CD14-positive monocyte (primary cell): ENCODE measurements at regions of chr3 and their contacts with region 1.

Region 1: DNA sequence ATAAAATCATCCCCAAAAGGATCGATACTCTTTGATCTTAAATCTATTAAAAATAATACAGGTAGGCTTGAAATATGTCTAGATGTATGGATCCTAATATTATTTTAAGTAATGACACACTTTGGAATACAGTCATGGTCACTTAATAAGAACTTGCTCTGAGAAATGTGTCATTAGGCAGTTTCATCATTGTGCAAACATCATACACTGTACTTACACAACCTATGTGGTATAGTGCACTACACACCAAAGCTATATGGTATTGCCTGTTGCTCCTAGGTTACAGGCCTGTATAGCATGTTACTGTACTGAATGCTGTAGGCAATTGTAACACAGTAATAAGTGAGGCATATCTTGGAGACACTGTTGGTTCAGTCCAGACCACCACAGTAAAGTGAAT is 307.1 kb downstream of the RAP2B start:
- DNase-seq: no peak
- H3K4me3 ChIP-seq: no peak overlapping the region
- H3K4me3 Mint-ChIP-seq: no peak overlapping the region
- H3K27ac ChIP-seq: no peak overlapping the region
- H3K27ac Mint-ChIP-seq: no peak overlapping the region
- H3K4me1 ChIP-seq: no peaks in the 10 kb centered on the region
- H3K4me1 Mint-ChIP-seq: no peaks in the 10 kb centered on the region
- H3K27me3 ChIP-seq: no peaks in the 10 kb centered on the region
- H3K27me3 Mint-ChIP-seq: peaks cover 0 to 7% (median 0%) of the 10 kb centered on the region in 3 donors
- CTCF ChIP-seq: no peak

Region 2: DNA sequence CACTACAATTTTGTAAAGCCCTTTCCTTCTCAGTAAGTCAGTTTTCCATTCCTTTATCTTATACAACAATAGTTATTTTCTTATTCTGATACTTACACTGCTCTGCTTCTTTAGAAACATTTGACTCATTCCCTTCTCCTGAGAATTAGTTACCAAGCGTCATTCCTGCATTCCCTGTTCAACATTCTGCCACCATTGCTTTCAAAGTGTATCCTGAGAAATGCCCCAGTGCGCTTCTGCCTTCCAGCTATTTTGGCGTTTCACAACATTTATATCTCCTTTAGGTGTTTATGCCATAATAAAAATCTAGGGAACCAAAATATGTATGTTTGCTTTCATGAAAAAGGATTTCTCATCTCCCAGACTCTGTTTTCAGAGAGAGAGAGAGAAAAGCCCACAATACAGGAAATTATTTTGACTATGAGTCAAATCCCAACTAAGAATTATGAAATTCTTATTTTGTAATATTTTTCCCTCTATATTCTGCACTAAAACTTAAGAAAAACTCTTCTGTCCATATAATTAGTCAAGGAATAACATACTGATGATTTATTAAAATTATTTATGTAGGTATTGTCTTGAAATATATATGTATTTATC is 425.3 kb before region 1 on chr3:
- intact Hi-C with region 1: no loop called
- DNase-seq: peak in 2 of 3 donors; percentile 21 to 44
- H3K4me3 ChIP-seq: peak overlapping the region in 1 of 3 experiments; percentile 67
- H3K4me3 Mint-ChIP-seq: peak overlapping the region; percentile 66 to 72
- H3K27ac ChIP-seq: peak overlapping the region in 1 of 2 donors; percentile 17
- H3K27ac Mint-ChIP-seq: peak overlapping the region in 6 of 7 donors; percentile 39 to 86 (median 63)
- H3K4me1 ChIP-seq: peaks cover 17 to 23% of the 10 kb centered on the region in 2 donors
- H3K4me1 Mint-ChIP-seq: peaks cover 24% of the 10 kb centered on the region
- H3K27me3 ChIP-seq: no peaks in the 10 kb centered on the region
- H3K27me3 Mint-ChIP-seq: no peaks in the 10 kb centered on the region
- CTCF ChIP-seq: no peak

Region 3: DNA sequence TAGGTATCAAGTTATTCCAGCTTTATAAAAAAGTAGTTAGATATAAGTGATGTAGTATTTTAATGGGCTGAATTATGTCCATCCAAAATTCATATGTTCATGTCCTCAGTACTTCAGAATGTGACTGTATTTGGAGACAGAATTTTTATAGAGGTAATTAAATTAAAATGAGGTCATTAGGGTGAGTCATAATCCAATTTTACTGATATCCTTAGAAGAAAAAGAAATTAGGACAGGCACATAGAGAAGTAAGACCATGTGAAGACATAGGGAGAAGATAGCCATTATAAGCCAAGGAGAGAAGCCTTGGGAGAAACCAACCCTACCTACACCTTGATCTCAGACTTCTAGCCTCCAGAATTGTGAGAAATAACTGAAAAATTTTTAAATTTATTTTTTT is 276.8 kb before region 1 on chr3:
- intact Hi-C with region 1: no loop called
- DNase-seq: no peak
- H3K4me3 ChIP-seq: no peak overlapping the region
- H3K4me3 Mint-ChIP-seq: no peak overlapping the region
- H3K27ac ChIP-seq: no peak overlapping the region
- H3K27ac Mint-ChIP-seq: no peak overlapping the region
- H3K4me1 ChIP-seq: no peaks in the 10 kb centered on the region
- H3K4me1 Mint-ChIP-seq: no peaks in the 10 kb centered on the region
- H3K27me3 ChIP-seq: no peaks in the 10 kb centered on the region
- H3K27me3 Mint-ChIP-seq: peaks cover 0 to 1% (median 0%) of the 10 kb centered on the region in 3 donors
- CTCF ChIP-seq: no peak

Region 4: DNA sequence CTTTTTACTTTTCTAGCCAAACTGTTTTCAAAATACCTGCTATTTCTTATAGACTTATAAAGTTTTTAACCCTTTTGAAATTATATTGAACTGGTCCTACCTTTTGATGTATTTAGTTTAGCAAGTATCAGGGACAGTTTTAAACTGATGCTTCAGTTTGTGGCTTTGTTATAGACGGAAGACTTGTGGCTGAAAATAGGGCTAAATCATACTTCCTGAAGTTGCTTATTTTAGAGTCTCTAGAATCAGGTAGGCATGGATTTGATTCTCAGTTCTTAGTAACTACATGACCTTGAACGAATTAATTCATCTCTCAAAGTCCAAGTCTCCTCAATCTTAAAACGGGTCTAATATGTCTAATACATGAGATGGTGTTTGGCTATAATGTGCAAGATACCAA is 15.7 kb after region 1 on chr3:
- intact Hi-C with region 1: loop called in 1 of 2 experiments (anchors 2 kb)
- DNase-seq: no peak
- H3K4me3 ChIP-seq: no peak overlapping the region
- H3K4me3 Mint-ChIP-seq: no peak overlapping the region
- H3K27ac ChIP-seq: no peak overlapping the region
- H3K27ac Mint-ChIP-seq: peak overlapping the region in 1 of 7 donors; percentile 2
- H3K4me1 ChIP-seq: no peaks in the 10 kb centered on the region
- H3K4me1 Mint-ChIP-seq: no peaks in the 10 kb centered on the region
- H3K27me3 ChIP-seq: no peaks in the 10 kb centered on the region
- H3K27me3 Mint-ChIP-seq: no peaks in the 10 kb centered on the region
- CTCF ChIP-seq: no peak

Region 5: DNA sequence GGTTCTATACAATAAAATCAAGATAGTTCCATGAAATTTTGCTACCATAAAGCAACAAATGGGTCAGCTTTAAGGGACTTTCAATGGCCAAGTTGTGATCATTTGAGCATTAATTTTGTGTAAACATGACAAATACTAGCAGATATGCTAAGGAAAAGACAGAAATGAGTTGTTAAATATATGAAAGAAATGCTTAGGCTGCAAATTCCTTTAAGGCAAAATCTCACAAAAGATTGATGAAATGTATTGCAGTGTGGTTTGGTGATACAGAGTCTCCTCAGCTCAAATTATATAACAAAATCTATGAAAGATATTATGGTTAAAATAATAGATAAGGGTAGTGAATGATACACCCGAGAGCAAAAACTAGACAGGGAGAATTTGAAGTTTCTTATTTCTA is 70.1 kb after region 1 on chr3:
- intact Hi-C with region 1: no loop called
- DNase-seq: no peak
- H3K4me3 ChIP-seq: no peak overlapping the region
- H3K4me3 Mint-ChIP-seq: no peak overlapping the region
- H3K27ac ChIP-seq: no peak overlapping the region
- H3K27ac Mint-ChIP-seq: no peak overlapping the region
- H3K4me1 ChIP-seq: no peaks in the 10 kb centered on the region
- H3K4me1 Mint-ChIP-seq: no peaks in the 10 kb centered on the region
- H3K27me3 ChIP-seq: no peaks in the 10 kb centered on the region
- H3K27me3 Mint-ChIP-seq: peaks cover 0 to 2% (median 1%) of the 10 kb centered on the region in 3 donors
- CTCF ChIP-seq: no peak